ENCODE measurements at regions of chr14 and their contacts with region 1.

Region 1: GRCh38 chr14:58072288-58073071 is 79.5 kb downstream of the ARMH4 start:
- DNase-seq: peak; percentile 56
- H3K4me3 ChIP-seq: no peak overlapping the region
- H3K27ac ChIP-seq: no peak overlapping the region
- H3K27me3 ChIP-seq: peaks cover 2% of the 10 kb centered on the region
- CTCF ChIP-seq: peak; percentile 80

Region 2: DNA sequence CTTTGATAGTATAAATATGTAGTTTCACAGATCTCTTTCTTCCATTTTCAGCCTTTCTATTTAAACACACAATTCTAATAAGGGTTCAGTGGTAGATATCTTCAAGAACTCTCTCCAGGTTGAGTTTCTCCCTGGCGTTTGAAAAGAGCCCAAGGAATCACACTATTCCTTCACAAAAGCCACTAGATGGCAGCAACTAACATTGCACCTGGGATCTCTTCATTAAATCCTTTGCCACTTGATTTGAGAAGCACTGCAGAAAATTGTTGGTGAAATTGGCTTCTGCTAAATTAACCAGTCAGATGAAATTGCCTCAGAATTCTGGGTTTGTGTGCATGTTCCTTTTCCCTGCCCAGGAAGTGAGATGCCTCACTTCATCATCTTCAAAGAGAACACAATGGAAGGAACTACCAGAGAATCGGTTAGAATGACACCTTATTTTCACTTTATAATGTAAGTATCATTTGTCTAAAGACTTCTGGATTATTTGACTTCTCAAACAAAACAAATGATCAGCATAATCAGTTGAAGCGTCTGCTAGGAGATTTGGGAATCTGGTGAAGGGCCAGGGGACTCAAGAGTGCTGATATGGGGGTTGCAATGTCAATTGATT is 585.6 kb before region 1 on chr14:
- CTCF ChIA-PET with region 1: interaction called, 45 read pairs
- POLR2A ChIA-PET with region 1: no interaction called
- DNase-seq: peak; percentile 6
- H3K4me3 ChIP-seq: no peak overlapping the region
- H3K27ac ChIP-seq: no peak overlapping the region
- H3K27me3 ChIP-seq: no peaks in the 10 kb centered on the region
- CTCF ChIP-seq: peak; percentile 72

Region 3: GRCh38 chr14:57692671-57693070 is 379.8 kb before region 1 on chr14:
- CTCF ChIA-PET with region 1: interaction called, 64 read pairs
- POLR2A ChIA-PET with region 1: no interaction called
- DNase-seq: peak; percentile 16
- H3K4me3 ChIP-seq: no peak overlapping the region
- H3K27ac ChIP-seq: no peak overlapping the region
- H3K27me3 ChIP-seq: no peaks in the 10 kb centered on the region
- CTCF ChIP-seq: peak; percentile 55

Region 4: DNA sequence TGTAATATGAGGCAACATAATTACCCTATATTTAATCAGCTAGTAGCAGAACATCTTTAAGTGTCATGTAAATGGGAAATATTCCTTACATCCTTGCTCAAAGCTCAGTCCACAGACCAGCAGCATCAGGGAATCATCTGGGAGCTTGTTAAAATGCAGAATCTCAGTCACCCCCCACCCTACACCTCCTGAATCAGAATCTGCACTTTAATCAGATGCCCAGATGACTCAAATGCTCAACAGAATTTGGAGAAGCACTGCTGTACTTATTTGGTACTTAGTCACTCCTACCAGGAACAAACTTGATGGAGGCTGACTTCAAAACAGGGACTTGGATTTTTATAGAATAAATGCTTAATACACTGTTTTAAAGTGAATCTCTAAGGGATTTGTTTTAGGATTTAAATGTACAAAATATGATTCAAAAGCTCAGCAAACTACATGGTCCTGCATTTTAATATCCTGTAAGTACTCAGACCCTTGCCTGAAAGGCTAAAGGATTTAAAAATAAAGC is 16.9 kb before region 1 on chr14:
- CTCF ChIA-PET with region 1: interaction called, 13 read pairs
- POLR2A ChIA-PET with region 1: no interaction called
- DNase-seq: no peak
- H3K4me3 ChIP-seq: no peak overlapping the region
- H3K27ac ChIP-seq: no peak overlapping the region
- H3K27me3 ChIP-seq: peaks cover 2% of the 10 kb centered on the region
- CTCF ChIP-seq: no peak